MCF 10A (cell line): ENCODE measurements at regions of chr5 and their contacts with region 1.

Region 1: DNA sequence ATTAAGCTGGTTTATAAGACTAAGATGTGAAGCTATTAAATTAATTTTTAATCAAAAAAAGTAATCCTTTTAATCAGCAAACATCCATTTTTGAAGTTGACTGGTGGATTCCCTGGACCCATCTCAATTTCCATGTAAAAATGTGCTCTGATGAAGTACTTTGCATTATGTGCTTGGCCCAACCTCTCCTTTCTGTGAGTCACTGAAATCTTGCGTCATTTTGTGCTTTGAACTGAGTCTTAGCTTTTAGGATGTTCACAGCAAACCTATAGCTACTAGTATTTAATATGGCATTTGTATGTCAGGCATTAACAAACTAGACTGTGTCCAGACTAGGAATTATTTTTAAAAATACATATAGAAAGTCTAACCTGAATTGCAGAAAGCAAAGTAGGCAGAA is 55.0 kb upstream of the CDH12 start:
- DNase-seq: peak; percentile 88
- H3K4me3 Mint-ChIP-seq: peak overlapping the region; percentile 7
- H3K27ac Mint-ChIP-seq: peak overlapping the region; percentile 85
- H3K4me1 Mint-ChIP-seq: peaks cover 12% of the 10 kb centered on the region
- H3K27me3 Mint-ChIP-seq: no peaks in the 10 kb centered on the region
- CTCF ChIP-seq: no peak

Region 2: GRCh38 chr5:22258139-22258538 is 650.0 kb before region 1 on chr5:
- CTCF ChIA-PET with region 1: no interaction called
- POLR2A ChIA-PET with region 1: no interaction called
- intact Hi-C with region 1: no loop called
- DNase-seq: no peak
- H3K4me3 Mint-ChIP-seq: no peak overlapping the region
- H3K27ac Mint-ChIP-seq: no peak overlapping the region
- H3K4me1 Mint-ChIP-seq: no peaks in the 10 kb centered on the region
- H3K27me3 Mint-ChIP-seq: no peaks in the 10 kb centered on the region
- CTCF ChIP-seq: no peak

Region 3: GRCh38 chr5:22896155-22896554 is 12.0 kb before region 1 on chr5:
- CTCF ChIA-PET with region 1: interaction called, 5 read pairs
- POLR2A ChIA-PET with region 1: interaction called, 27 read pairs
- intact Hi-C with region 1: no loop called
- DNase-seq: peak; percentile 50
- H3K4me3 Mint-ChIP-seq: no peak overlapping the region
- H3K27ac Mint-ChIP-seq: peak overlapping the region; percentile 91
- H3K4me1 Mint-ChIP-seq: peaks cover 35% of the 10 kb centered on the region
- H3K27me3 Mint-ChIP-seq: no peaks in the 10 kb centered on the region
- CTCF ChIP-seq: no peak